ENCODE measurements at regions of chr6 and their contacts with region 1.

Region 1: GRCh38 chr6:24283043-24283985 is 74.5 kb downstream of the DCDC2 start:
- DNase-seq: peak; percentile 67
- ATAC-seq: peak; percentile 99
- H3K4me3 ChIP-seq: no peak overlapping the region
- H3K27ac ChIP-seq: no peak overlapping the region
- H3K4me1 ChIP-seq: no peaks in the 10 kb centered on the region; the same call in 1 of the 2 replicates
- H3K27me3 ChIP-seq: no peaks in the 10 kb centered on the region
- CTCF ChIP-seq: peak; percentile 82

Region 2: GRCh38 chr6:24394780-24395437 is 111.6 kb after region 1 on chr6:
- CTCF ChIA-PET with region 1: interaction called, 31 read pairs
- POLR2A ChIA-PET with region 1: no interaction called
- in situ Hi-C with region 1: no loop called
- intact Hi-C with region 1: no loop called
- DNase-seq: no peak
- ATAC-seq: no peak
- H3K4me3 ChIP-seq: no peak overlapping the region
- H3K27ac ChIP-seq: no peak overlapping the region
- H3K4me1 ChIP-seq: no peaks in the 10 kb centered on the region
- H3K27me3 ChIP-seq: no peaks in the 10 kb centered on the region; the same call in 1 of the 2 replicates
- CTCF ChIP-seq: no peak